ENCODE measurements at regions of chr17 and their contacts with region 1.

Region 1: DNA sequence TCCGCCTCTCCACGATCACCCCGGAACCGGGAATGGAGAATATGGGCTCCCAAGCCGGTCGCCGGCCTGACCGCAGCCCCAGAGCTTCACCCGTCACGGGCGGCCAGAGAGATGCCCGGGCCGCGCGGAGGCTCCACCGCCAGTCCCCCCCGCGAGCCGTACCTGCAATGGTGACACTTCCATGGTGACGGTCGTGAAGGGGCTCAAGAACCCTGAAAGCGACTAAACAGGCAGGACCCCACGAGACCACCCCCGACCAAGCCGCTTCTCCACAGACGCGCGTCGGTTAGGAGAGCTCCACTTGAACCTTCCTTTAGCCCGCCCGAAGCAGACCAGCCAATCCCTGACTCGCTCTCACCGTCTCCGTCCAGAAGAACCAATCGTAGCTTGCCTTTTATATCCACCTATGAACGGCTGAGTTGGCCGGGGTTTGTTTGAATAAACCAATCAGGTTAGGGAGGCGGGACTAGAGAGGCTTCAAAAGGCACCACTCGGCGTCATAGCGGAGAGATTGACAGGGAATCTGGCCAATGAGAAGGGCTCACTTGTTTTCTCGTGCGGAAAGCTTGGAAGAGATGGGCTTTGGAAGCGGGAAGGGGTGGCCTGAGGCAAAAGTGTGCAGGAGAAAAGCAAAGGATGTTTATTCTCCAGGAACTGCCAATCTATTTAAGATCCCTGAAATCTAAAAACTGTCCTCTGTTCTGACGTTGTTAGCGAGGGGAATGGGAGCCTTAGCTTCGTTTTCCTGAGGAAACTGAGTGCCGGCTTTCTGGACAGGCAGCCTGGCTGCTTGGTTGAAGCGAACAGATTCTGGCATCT is at the start of gene TOP2A:
- DNase-seq: peak; percentile 97
- H3K4me3 ChIP-seq: peak within 1 kb of the TSS; percentile 81
- CTCF ChIP-seq: no peak

Region 2: DNA sequence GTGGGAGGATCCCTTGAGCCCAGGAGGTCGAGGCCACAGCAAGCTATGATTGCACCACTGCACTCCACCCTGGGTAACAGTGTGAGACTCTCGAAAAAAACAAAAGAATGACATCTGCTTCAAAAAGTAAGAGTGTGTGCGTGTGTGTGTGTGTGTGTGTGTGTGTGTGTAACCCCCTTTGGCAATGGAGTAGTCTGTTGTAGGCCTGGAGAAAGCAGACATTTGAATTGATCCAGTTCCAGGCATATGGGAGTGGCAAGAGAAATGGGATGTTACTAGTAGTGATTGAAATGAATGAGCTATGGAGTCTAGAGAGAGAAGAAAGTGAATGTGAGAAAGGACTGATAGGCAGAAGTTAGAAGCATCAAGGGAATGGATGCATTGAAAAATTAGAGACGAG is 267.5 kb before region 1 on chr17:
- CTCF ChIA-PET with region 1: no interaction called
- POLR2A ChIA-PET with region 1: no interaction called
- DNase-seq: no peak
- H3K4me3 ChIP-seq: no peak overlapping the region
- CTCF ChIP-seq: no peak

Region 3: GRCh38 chr17:40303009-40303657 is 114.7 kb before region 1 on chr17:
- CTCF ChIA-PET with region 1: interaction called, 51 read pairs
- POLR2A ChIA-PET with region 1: no interaction called
- DNase-seq: no peak
- H3K4me3 ChIP-seq: no peak overlapping the region
- CTCF ChIP-seq: peak; percentile 58

Region 4: GRCh38 chr17:40399185-40399584 is 18.6 kb before region 1 on chr17:
- CTCF ChIA-PET with region 1: interaction called, 226 read pairs
- POLR2A ChIA-PET with region 1: no interaction called
- DNase-seq: peak; percentile 12
- H3K4me3 ChIP-seq: no peak overlapping the region
- CTCF ChIP-seq: peak; percentile 21

Region 5: GRCh38 chr17:40443583-40444327 is 25.9 kb after region 1 on chr17:
- CTCF ChIA-PET with region 1: interaction called, 15 read pairs
- POLR2A ChIA-PET with region 1: interaction called, 9 read pairs
- DNase-seq: no peak
- H3K4me3 ChIP-seq: peak overlapping the region; percentile 99
- CTCF ChIP-seq: peak; percentile 84

Region 6: GRCh38 chr17:40536295-40537171 is 118.7 kb after region 1 on chr17:
- CTCF ChIA-PET with region 1: interaction called, 133 read pairs
- POLR2A ChIA-PET with region 1: no interaction called
- DNase-seq: no peak
- H3K4me3 ChIP-seq: no peak overlapping the region
- CTCF ChIP-seq: no peak

Region 7: GRCh38 chr17:40707720-40708119 is 289.9 kb after region 1 on chr17:
- CTCF ChIA-PET with region 1: no interaction called
- POLR2A ChIA-PET with region 1: no interaction called
- DNase-seq: no peak
- H3K4me3 ChIP-seq: no peak overlapping the region
- CTCF ChIP-seq: no peak

Measured in AG04449 (cell line).